Dorsolateral prefrontal cortex (tissue), 120 donors: ENCODE measurements at regions of chr6 and their contacts with region 1.

Region 1: GRCh38 chr6:20092071-20092566 is 120.2 kb downstream of the MBOAT1 start:
- DNase-seq: no peak
- H3K4me3 ChIP-seq: no peak overlapping the region
- H3K27ac ChIP-seq: no peak overlapping the region
- H3K27me3 ChIP-seq: no peaks in the 10 kb centered on the region
- CTCF ChIP-seq: peak; percentile 72 to 92 (median 83)

Region 2: GRCh38 chr6:19896693-19897010 is 195.5 kb before region 1 on chr6:
- intact Hi-C with region 1: no loop called
- DNase-seq: no peak
- H3K4me3 ChIP-seq: no peak overlapping the region
- H3K27ac ChIP-seq: no peak overlapping the region
- H3K27me3 ChIP-seq: no peaks in the 10 kb centered on the region
- CTCF ChIP-seq: no peak

Region 3: DNA sequence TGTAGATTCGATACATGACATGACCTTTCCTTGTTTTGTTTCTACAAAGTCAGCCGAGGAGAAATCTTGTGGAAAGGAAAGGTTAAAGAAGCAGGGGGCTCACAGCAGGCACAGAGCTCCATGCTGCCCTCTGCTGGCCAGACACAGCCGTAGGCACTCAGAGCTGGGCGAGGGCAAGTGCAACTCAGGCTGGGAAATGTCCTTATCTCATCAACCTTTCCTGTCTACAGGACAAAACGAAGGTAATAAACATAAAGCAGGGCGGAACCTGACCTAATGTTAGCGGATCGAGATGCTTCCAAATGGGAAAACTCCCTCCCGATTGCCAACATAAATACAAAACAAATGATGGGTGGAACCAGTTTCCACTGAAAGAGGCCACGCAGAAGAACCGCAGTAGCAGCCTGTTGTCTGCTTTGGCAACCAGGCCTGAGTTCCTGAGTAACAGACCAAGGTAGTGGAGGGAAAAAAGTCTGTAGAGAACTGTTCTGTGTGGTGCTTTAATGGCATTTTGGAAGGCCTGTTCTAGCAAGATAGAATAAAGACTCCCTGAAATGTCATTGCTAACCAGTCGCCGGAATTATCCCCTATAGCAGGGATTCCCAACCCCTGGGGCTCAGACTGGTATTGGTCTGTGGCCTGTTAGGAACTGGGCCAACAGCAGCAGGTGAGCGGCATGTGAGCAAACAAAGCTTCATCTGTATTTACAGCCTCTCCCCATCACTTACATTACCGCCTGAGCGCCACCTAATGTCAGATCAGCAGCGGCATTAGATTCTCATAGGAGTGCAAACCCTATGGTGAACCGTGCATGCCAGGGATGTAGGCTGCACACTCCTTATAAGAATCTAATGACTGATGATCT is 34.9 kb after region 1 on chr6:
- intact Hi-C with region 1: loop called (anchors 1 to 5 kb)
- DNase-seq: peak in 9 of 10 donors; percentile 10 to 66 (median 50)
- H3K4me3 ChIP-seq: peak overlapping the region in 2 of 59 donors; percentile 2 to 8
- H3K27ac ChIP-seq: peak overlapping the region in 1 of 59 donors; percentile 10
- H3K27me3 ChIP-seq: peaks cover 0 to 5% (median 0%) of the 10 kb centered on the region in 45 donors
- CTCF ChIP-seq: peak; percentile 39 to 95 (median 88)

Region 4: DNA sequence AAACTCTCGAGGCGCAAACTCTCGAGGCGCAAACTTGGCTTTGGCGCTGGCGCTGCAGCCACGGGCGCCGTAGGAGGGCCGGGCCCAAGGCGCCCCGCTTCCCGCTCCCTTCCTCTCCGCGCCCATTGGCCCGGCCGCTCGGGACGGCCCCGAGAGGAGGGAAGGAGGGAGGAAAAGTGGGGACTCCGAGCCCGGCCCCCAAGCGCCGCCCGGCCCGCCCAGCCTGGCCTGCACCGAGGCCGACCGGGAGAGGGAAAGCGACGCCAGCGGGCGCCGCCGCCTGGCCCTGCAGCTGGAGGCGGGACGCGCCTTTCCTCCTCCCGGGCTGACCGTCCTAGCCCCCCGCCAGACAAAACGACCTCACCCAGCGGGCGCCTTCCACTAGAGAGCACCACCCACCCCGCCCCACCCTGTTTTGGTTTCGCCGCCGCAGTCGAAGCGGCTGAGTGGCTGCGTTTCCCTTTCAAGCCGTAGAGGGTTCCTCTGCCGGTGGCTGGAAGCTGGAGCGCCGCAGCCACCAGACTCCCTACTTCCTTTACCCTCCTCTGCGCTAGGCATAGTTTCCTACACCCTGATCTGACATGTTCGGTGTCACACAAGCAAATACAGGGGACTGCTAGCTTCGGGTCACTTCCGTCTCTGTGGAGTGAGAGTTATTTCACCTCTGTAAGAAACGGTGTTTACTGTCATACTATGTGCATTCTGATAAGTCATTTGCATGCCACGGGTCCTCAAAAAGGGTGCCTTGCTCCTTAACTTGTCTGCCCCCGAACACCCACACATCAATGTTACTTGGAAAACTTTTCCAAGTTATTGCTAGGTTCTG is 120.5 kb after region 1 on chr6 and contains the start of gene MBOAT1:
- intact Hi-C with region 1: loop called (anchors 5 to 10 kb)
- DNase-seq: peak; percentile 14 to 84 (median 52)
- H3K4me3 ChIP-seq: peak within 1 kb of the TSS; percentile 53 to 83 (median 69)
- H3K27ac ChIP-seq: peak within 1 kb of the TSS in 51 of 59 donors; percentile 8 to 82 (median 60)
- H3K27me3 ChIP-seq: no peaks in the 10 kb centered on the region
- CTCF ChIP-seq: peak in 37 of 56 donors; percentile 2 to 54 (median 23)
- total RNA-seq, gene MBOAT1: 0.27 to 10.5 (median 1.4) TPM